ENCODE measurements at regions of chr10 and their contacts with region 1.

Region 1: DNA sequence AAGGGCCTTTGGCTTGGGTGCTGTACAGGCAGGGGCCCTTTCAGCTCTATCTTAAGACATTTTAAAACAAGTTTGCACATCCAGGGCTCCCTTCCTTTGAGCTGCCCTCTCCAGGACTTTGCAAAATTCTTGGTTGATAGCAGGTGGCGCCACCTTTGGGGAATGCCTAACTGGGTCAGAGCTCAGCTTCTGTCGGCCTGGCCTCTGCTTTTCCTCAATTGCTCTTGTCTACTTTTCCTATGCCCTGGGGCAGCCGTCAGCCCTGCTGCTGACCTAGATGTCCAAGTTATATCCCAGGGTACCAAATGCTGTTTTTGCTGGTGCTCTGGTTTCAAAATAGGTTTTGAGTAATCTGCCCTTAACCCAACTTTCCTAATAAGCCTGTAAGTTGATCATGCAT is 65.8 kb downstream of the APBB1IP start:
- DNase-seq: no peak
- ATAC-seq: peak; percentile 64
- H3K4me3 ChIP-seq: no peak overlapping the region
- H3K27ac ChIP-seq: no peak overlapping the region
- H3K4me1 ChIP-seq: no peaks in the 10 kb centered on the region
- H3K27me3 ChIP-seq: no peaks in the 10 kb centered on the region
- CTCF ChIP-seq: peak; percentile 13 to 45 (median 38); a peak in 4 of 6 replicates
- EP300 ChIP-seq: no peak
- POLR2A ChIP-seq: no peak
- RAD21 ChIP-seq: peak; percentile 34; the same call in 1 of the 2 replicates

Region 2: GRCh38 chr10:26516540-26517101 is 12.7 kb after region 1 on chr10:
- CTCF ChIA-PET with region 1: interaction called, 3 read pairs
- POLR2A ChIA-PET with region 1: interaction called, 4 read pairs
- RAD21 ChIA-PET with region 1: no interaction called
- SMC1A ChIA-PET with region 1: interaction called, 12 read pairs
- in situ Hi-C with region 1: no loop called
- intact Hi-C with region 1: loop called (anchors 1 kb)
- DNase-seq: no peak
- ATAC-seq: no peak
- H3K4me3 ChIP-seq: no peak overlapping the region
- H3K27ac ChIP-seq: no peak overlapping the region
- H3K4me1 ChIP-seq: no peaks in the 10 kb centered on the region
- H3K27me3 ChIP-seq: no peaks in the 10 kb centered on the region
- CTCF ChIP-seq: no peak
- EP300 ChIP-seq: no peak
- POLR2A ChIP-seq: no peak
- RAD21 ChIP-seq: no peak

Measured in GM12878 (cell line).